Posterior vena cava (tissue), 2 donors: ENCODE measurements at regions of chr4 and their contacts with region 1.

Region 1: GRCh38 chr4:83589279-83589678 is 53.4 kb downstream of the GPAT3 start:
- DNase-seq: no peak

Region 2: GRCh38 chr4:81786063-81786763 is 1803.1 kb before region 1 on chr4:
- intact Hi-C with region 1: loop called in 1 of 2 experiments (anchors 5 kb)
- DNase-seq: no peak

Region 3: DNA sequence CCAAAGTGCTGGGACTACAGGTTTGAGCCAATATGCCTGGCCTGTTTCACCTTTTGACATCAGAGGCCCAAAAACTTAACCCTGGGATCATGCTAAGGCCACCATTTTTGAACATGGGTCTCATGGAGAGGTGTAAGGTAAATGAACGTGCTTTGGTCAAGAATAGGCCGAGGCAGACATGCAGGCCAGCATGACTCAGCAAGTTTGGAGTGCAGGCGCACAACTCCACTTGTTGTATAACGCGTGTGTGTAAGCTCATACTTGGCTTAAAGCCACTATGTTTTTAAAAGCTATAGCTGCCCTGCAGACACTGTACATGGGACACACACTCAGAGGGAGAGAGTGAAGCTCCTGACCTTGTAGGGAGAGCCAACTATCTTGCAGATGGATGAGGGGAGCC is 210.9 kb before region 1 on chr4:
- intact Hi-C with region 1: no loop called
- DNase-seq: no peak